Activated naive CD4-positive, alpha-beta T cell treated with anti-CD3 and anti-CD28 coated beads for 36 hours (primary cell): ENCODE measurements at regions of chr3 and their contacts with region 1.

Region 1: DNA sequence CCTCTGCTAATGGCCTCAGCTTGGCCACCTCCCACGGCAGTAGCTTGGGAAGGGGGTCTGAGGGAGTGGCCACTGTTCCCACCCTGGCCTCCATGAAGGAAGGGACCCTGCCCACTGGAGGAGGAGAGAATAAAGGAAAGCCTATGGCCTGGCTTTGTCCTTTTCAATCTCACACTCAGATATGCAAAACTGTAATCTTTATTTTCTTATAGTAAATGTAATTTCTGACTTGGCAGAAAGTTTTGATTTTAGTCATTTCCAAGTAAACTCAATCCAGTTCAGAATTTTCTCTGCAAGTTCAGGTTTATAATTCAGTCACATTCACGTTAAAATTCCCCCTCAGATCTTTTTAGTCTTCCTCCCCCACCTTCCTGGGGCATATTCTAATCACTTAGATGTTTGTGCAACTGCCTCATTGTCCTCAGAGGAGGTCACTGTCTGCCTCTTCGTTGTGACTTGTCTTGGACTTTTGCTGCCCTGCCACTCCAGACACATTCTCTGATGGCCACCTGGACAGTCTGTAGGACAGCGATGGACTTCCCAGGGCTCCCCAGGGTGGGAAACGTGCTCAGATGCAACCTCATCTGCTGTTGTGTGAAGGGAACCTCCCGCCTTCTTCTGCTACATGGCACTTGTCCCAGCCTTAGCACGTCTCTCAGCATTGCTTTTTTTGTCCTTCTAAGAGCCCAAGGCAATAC is 222.8 kb upstream of the TBL1XR1 start:
- DNase-seq: peak; percentile 53
- H3K4me3 Mint-ChIP-seq: no peak overlapping the region
- H3K27ac Mint-ChIP-seq: peak overlapping the region; percentile 86
- H3K4me1 Mint-ChIP-seq: peaks cover 27% of the 10 kb centered on the region
- H3K27me3 Mint-ChIP-seq: peaks cover 2% of the 10 kb centered on the region

Region 2: GRCh38 chr3:176840641-176841286 is 579.3 kb before region 1 on chr3:
- CTCF ChIA-PET with region 1: no interaction called
- intact Hi-C with region 1: no loop called
- DNase-seq: no peak
- H3K4me3 Mint-ChIP-seq: no peak overlapping the region
- H3K27ac Mint-ChIP-seq: no peak overlapping the region
- H3K4me1 Mint-ChIP-seq: no peaks in the 10 kb centered on the region
- H3K27me3 Mint-ChIP-seq: peaks cover 8% of the 10 kb centered on the region

Region 3: GRCh38 chr3:177300039-177300833 is 119.8 kb before region 1 on chr3:
- CTCF ChIA-PET with region 1: no interaction called
- intact Hi-C with region 1: no loop called
- DNase-seq: no peak
- H3K4me3 Mint-ChIP-seq: no peak overlapping the region
- H3K27ac Mint-ChIP-seq: no peak overlapping the region
- H3K4me1 Mint-ChIP-seq: peaks cover 3% of the 10 kb centered on the region
- H3K27me3 Mint-ChIP-seq: no peaks in the 10 kb centered on the region

Region 4: DNA sequence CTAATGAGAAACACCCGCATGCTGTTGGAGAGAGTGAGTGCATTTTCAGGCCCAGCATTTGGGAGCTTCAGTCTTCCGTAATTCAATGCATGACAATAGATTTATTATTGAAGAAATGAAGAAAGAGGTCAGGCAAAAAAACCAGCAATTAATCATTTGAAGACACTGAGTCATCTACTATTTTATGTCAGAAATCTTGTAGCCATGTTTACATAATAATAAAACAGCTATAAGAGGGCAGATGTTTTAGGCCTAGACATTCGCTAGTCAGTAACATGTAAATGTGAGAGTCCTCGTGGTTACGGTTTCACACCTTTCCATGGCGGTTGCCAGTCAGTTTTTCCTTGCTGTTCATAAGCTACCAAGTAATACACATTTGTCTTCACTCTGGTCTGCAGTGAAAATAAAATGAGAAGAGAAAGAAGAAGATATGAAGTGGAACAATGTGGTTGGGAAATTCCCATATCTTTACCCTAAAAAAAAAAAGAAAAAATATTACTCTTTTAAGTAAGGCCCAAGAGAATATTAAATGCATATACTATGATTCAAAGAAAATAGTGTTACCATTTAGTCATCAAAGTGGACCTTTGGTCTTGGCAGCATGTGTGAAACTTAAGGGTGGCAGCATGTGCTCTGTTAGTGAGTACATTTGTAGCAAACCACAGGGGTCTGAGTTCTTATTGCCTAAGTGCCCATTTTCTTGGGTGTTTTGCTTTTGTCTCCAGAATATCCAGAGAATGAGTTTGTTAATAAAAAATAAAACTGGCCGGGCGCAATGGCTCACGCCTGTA is 82.3 kb before region 1 on chr3:
- CTCF ChIA-PET with region 1: no interaction called
- intact Hi-C with region 1: loop called (anchors 1 kb)
- DNase-seq: peak; percentile 91
- H3K4me3 Mint-ChIP-seq: no peak overlapping the region
- H3K27ac Mint-ChIP-seq: peak overlapping the region; percentile 42
- H3K4me1 Mint-ChIP-seq: peaks cover 36% of the 10 kb centered on the region
- H3K27me3 Mint-ChIP-seq: peaks cover 5% of the 10 kb centered on the region

Region 5: DNA sequence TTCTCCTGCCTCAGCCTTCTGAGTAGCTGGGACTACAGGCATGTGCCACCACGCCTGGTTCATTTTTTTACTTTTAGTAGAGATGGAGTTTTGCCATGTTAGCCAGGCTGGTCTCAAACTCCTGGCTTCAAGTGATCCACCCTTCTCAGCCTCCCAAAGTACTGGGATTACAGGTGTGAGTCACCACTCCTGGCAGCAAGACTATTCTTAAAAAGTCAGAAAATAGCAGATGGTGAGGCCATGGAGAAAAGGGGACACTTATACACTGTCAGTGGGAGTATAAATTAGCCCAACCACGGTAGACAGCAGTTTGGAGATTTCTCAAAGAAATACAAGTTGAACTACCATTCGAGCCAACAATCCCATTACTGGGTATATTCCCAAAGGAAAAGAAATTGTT is 380.5 kb after region 1 on chr3:
- CTCF ChIA-PET with region 1: no interaction called
- intact Hi-C with region 1: loop called (anchors 1 kb)
- DNase-seq: no peak
- H3K4me3 Mint-ChIP-seq: no peak overlapping the region
- H3K27ac Mint-ChIP-seq: no peak overlapping the region
- H3K4me1 Mint-ChIP-seq: peaks cover 23% of the 10 kb centered on the region
- H3K27me3 Mint-ChIP-seq: no peaks in the 10 kb centered on the region